B cell (primary cell): ENCODE measurements at regions of chr1 and their contacts with region 1.

Region 1: DNA sequence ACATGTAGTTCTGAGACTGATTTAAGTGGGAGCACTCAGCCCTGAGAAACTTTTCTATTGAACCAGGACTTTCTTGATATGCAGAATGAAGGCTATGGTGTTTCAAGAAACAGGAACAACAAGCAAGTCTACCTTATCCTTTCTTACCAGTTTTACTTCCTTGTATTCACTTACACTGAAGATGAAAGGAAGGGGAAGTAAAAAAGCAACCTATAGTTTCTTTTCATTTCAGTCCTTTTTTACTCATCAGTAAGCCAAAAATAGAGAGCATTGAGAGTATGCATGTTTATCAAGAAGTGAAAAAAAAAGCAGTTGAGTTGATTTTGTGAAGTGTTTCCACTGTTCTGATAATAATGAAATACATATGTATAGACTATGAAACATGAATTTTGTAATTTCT is 1010.3 kb downstream of the AMY1C start:
- DNase-seq: peak; percentile 57
- ATAC-seq: peak; percentile 84
- H3K4me3 ChIP-seq: peak overlapping the region in 1 of 5 experiments; percentile 25
- H3K4me3 Mint-ChIP-seq: peak overlapping the region; percentile 60
- H3K27ac ChIP-seq: peak overlapping the region in 1 of 2 donors; percentile 52
- H3K27ac Mint-ChIP-seq: peak overlapping the region; percentile 74
- H3K4me1 ChIP-seq: peaks cover 24% of the 10 kb centered on the region in 2 donors
- H3K4me1 Mint-ChIP-seq: peaks cover 20% of the 10 kb centered on the region
- H3K27me3 ChIP-seq: no peaks in the 10 kb centered on the region
- H3K27me3 Mint-ChIP-seq: no peaks in the 10 kb centered on the region
- CTCF ChIP-seq: no peak

Region 2: GRCh38 chr1:104593413-104594187 is 166.4 kb before region 1 on chr1:
- CTCF ChIA-PET with region 1: no interaction called
- POLR2A ChIA-PET with region 1: no interaction called
- intact Hi-C with region 1: loop called (anchors 1 kb)
- DNase-seq: peak; percentile 58
- ATAC-seq: peak; percentile 76
- H3K4me3 ChIP-seq: peak overlapping the region in 1 of 5 experiments; percentile 36
- H3K4me3 Mint-ChIP-seq: peak overlapping the region; percentile 70
- H3K27ac ChIP-seq: peak overlapping the region; percentile 77 to 81
- H3K27ac Mint-ChIP-seq: peak overlapping the region; percentile 94
- H3K4me1 ChIP-seq: peaks cover 15 to 22% of the 10 kb centered on the region in 2 donors
- H3K4me1 Mint-ChIP-seq: peaks cover 28% of the 10 kb centered on the region
- H3K27me3 ChIP-seq: no peaks in the 10 kb centered on the region
- H3K27me3 Mint-ChIP-seq: no peaks in the 10 kb centered on the region
- CTCF ChIP-seq: no peak